ENCODE measurements at regions of chr18 and their contacts with region 1.

Region 1: DNA sequence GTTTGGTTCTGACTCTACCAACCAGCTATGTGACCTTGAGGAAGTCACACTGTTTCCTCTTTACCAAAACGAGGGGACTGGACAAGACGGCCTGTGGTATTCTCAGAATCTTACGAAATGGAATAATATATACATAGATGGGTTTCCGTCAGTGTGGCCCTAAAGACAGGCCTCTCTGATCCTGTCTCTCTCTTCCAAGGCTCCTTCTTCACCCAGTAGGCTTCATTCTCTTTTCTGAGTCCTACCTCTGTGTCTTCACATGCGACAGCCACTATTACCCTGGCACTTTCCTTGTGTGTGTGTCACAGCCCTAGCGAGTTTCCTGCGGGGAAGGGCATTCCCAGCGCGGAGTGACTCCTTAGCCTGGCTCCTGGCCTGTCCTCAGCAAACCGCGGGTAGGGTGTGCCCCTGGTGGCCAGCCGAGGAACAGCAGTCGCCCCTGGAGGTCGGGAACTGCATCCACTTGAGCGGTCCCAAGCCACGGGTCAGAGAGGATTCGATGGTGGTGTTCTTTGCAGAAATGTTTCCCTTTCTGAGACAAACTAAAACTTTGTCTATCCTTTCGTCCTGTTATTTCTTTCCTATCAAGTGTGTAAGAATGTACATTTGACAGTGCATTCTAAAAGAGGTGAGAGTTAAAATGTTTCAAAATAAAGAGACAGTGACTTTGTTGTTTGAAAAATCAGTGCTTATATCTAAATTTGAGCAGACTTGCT is 63.3 kb downstream of the RAB31 start:
- DNase-seq: peak; percentile 86 to 92
- ATAC-seq: peak; percentile 97 to 99 (median 98)
- H3K4me3 ChIP-seq: no peak overlapping the region
- H3K27ac ChIP-seq: no peak overlapping the region
- H3K4me1 ChIP-seq: no peaks in the 10 kb centered on the region
- H3K27me3 ChIP-seq: no peaks in the 10 kb centered on the region
- CTCF ChIP-seq: peak; percentile 98

Region 2: DNA sequence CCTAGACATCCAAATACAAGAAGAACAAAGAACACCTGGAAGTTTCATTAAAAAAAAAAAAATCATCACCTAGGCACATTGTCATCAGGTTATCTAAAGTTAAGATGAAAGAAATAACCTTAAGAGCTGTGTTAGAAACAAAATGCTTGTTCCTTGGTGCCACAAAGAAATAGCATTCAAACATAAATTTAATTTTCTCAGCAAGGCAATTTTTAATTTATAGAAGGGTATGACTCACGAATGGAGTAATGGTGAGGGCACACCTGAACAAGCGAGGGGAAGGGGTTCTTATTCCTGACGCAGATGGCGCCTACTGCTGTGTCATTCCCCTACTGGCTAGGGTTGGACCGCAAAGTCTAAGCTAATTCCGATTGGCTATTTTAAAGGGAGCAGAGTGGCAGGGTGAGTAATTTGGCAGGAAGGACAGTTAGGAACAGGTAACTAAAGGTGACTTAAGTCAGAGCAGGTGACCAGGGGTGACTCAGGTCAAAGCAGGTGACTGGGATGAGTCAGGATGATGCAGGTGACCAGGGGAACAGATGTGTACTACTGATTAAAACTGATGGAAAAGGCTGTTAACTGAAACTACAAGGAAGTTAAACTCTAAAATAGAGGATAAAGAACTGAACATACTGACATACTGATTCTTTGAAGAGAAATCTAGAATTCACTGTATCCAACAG is 466.9 kb before region 1 on chr18:
- intact Hi-C with region 1: no loop called
- DNase-seq: no peak
- ATAC-seq: no peak
- H3K4me3 ChIP-seq: no peak overlapping the region
- H3K27ac ChIP-seq: no peak overlapping the region
- H3K4me1 ChIP-seq: no peaks in the 10 kb centered on the region
- H3K27me3 ChIP-seq: no peaks in the 10 kb centered on the region
- CTCF ChIP-seq: no peak

Region 3: GRCh38 chr18:9683407-9684396 is 87.7 kb before region 1 on chr18:
- intact Hi-C with region 1: loop called in 1 of 2 experiments (anchors 5 kb)
- DNase-seq: no peak
- ATAC-seq: peak; percentile 39 to 65 (median 64)
- H3K4me3 ChIP-seq: no peak overlapping the region
- H3K27ac ChIP-seq: no peak overlapping the region
- H3K4me1 ChIP-seq: peaks cover 12% of the 10 kb centered on the region
- H3K27me3 ChIP-seq: no peaks in the 10 kb centered on the region
- CTCF ChIP-seq: peak; percentile 34

Measured in psoas muscle (tissue), 8 donors.